Mammary epithelial cell (primary cell): ENCODE measurements at regions of chr20 and their contacts with region 1.

Region 1: GRCh38 chr20:23488996-23489395 is 1.9 kb upstream of the CST8 start:
- DNase-seq: no peak
- H3K4me3 ChIP-seq: no peak overlapping the region
- H3K27ac ChIP-seq: no peak overlapping the region
- H3K4me1 ChIP-seq: no peaks in the 10 kb centered on the region
- H3K27me3 ChIP-seq: no peaks in the 10 kb centered on the region
- CTCF ChIP-seq: no peak

Region 2: GRCh38 chr20:23562721-23563342 is 73.8 kb after region 1 on chr20:
- CTCF ChIA-PET with region 1: no interaction called
- dilution Hi-C with region 1: loop called (anchors 5 kb)
- in situ Hi-C with region 1: no loop called
- intact Hi-C with region 1: no loop called
- DNase-seq: no peak
- H3K4me3 ChIP-seq: no peak overlapping the region
- H3K27ac ChIP-seq: no peak overlapping the region
- H3K4me1 ChIP-seq: no peaks in the 10 kb centered on the region
- H3K27me3 ChIP-seq: no peaks in the 10 kb centered on the region
- CTCF ChIP-seq: no peak

Region 3: GRCh38 chr20:23874747-23875146 is 385.8 kb after region 1 on chr20:
- CTCF ChIA-PET with region 1: no interaction called
- dilution Hi-C with region 1: no loop called
- in situ Hi-C with region 1: no loop called
- intact Hi-C with region 1: no loop called
- DNase-seq: no peak
- H3K4me3 ChIP-seq: no peak overlapping the region
- H3K27ac ChIP-seq: no peak overlapping the region
- H3K4me1 ChIP-seq: peaks cover 7% of the 10 kb centered on the region
- H3K27me3 ChIP-seq: no peaks in the 10 kb centered on the region
- CTCF ChIP-seq: no peak